HepG2 (cell line): ENCODE measurements at regions of chr9 and their contacts with region 1.

Region 1: GRCh38 chr9:71812385-71812784 is 44.1 kb upstream of the CEMIP2 start:
- DNase-seq: no peak
- ATAC-seq: peak; percentile 47; the same call in 1 of the 3 replicates
- H3K4me3 ChIP-seq: no peak overlapping the region
- H3K27ac ChIP-seq: no peak overlapping the region
- H3K4me1 ChIP-seq: peaks cover 13% of the 10 kb centered on the region
- H3K27me3 ChIP-seq: 0 out of 5 replicates have a peak, but pooled peaks cover 0 to 1% of the 10 kb centered on the region in 2 experiments
- CTCF ChIP-seq: no peak
- EP300 ChIP-seq: no peak
- POLR2A ChIP-seq: no peak
- RAD21 ChIP-seq: no peak

Region 2: GRCh38 chr9:71243951-71244350 is 568.4 kb before region 1 on chr9:
- CTCF ChIA-PET with region 1: no interaction called
- POLR2A ChIA-PET with region 1: no interaction called
- in situ Hi-C with region 1: no loop called
- intact Hi-C with region 1: no loop called
- DNase-seq: no peak
- ATAC-seq: no peak
- H3K4me3 ChIP-seq: no peak overlapping the region
- H3K27ac ChIP-seq: no peak overlapping the region
- H3K4me1 ChIP-seq: no peaks in the 10 kb centered on the region
- H3K27me3 ChIP-seq: no peaks in the 10 kb centered on the region
- CTCF ChIP-seq: no peak
- EP300 ChIP-seq: no peak
- POLR2A ChIP-seq: no peak
- RAD21 ChIP-seq: no peak

Region 3: GRCh38 chr9:71854811-71855210 is 42.4 kb after region 1 on chr9:
- CTCF ChIA-PET with region 1: no interaction called
- POLR2A ChIA-PET with region 1: no interaction called
- in situ Hi-C with region 1: no loop called
- intact Hi-C with region 1: no loop called
- DNase-seq: no peak
- ATAC-seq: no peak
- H3K4me3 ChIP-seq: no peak overlapping the region
- H3K27ac ChIP-seq: no peak overlapping the region
- H3K4me1 ChIP-seq: peaks cover 6% of the 10 kb centered on the region; the same call in 1 of the 2 replicates
- H3K27me3 ChIP-seq: no peaks in the 10 kb centered on the region
- CTCF ChIP-seq: no peak
- EP300 ChIP-seq: no peak
- POLR2A ChIP-seq: no peak
- RAD21 ChIP-seq: no peak

Region 4: GRCh38 chr9:72013292-72013760 is 200.9 kb after region 1 on chr9:
- CTCF ChIA-PET with region 1: no interaction called
- POLR2A ChIA-PET with region 1: no interaction called
- in situ Hi-C with region 1: loop called (anchors 5 kb)
- intact Hi-C with region 1: no loop called
- DNase-seq: no peak
- ATAC-seq: peak; percentile 24; the same call in 1 of the 3 replicates
- H3K4me3 ChIP-seq: no peak overlapping the region
- H3K27ac ChIP-seq: no peak overlapping the region
- H3K4me1 ChIP-seq: peaks cover 36% of the 10 kb centered on the region
- H3K27me3 ChIP-seq: no peaks in the 10 kb centered on the region
- CTCF ChIP-seq: no peak
- EP300 ChIP-seq: no peak
- POLR2A ChIP-seq: no peak
- RAD21 ChIP-seq: no peak